ENCODE measurements at regions of chr10 and their contacts with region 1.

Region 1: DNA sequence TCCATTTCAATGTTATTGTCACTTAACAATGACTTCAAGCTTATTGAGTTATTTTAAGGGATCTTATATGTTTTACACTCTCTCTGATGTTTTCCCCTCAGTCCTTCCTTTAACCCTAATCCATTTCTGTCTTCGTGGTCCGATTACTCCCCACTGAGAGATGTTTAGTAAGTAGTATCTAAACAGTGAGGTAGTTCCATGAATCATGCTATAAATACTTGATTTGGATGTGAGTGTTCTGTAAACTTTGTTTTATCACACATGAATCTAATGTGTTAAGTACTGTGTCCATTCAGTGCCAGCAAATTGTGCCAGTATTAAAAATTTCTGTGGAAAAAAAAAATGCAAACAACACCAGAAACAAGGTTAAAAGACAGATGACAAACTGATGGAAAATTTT is 18.6 kb downstream of the RPP30 start:
- DNase-seq: no peak

Region 2: GRCh38 chr10:91251430-91252056 is 361.2 kb after region 1 on chr10:
- in situ Hi-C with region 1: loop called (anchors 10 kb)
- DNase-seq: peak; percentile 73